ENCODE measurements at regions of chr11 and their contacts with region 1.

Region 1: DNA sequence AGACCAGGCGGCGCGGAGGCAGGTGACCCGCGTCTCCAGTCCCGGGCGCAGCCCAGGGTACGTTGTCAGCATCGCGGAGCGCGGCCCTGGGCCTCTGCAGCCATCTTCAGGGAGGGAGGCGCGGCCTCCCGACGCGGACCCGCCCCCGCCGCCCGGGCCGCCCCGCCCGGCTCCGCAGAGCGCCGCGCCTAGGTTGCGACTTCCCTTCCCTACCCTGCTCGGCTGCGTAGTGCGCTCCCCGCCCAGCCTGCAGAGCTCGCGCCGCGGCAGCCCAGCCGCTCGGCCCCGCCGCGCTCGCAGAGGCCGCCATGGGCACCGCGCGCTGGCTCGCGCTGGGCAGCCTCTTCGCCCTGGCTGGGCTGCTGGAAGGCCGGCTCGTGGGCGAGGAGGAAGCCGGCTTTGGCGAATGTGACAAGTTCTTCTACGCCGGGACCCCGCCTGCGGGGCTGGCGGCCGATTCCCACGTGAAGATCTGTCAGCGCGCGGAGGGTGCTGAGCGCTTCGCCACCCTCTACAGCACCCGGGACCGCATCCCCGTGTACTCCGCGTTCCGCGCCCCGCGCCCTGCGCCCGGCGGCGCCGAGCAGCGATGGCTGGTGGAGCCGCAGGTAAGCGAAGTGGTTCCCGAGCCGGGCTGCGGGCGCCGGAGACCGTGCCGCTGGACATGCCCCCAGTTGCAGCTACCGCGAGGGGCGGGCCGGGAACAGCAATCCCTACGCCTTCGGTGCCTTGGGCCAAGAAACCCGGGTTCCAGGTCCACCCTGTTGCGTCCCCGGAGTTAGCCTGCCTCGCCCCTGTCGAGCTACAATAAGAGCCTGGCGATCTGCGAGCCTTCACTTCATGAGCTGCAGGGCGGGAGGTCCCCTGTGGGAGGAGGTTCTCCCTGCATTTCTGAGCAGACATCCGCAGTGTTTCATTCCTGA is at the start of gene ENDOD1:
- DNase-seq: peak; percentile 47 to 90 (median 79)
- H3K4me3 ChIP-seq: peak within 1 kb of the TSS; percentile 61 to 99 (median 91)
- H3K27ac ChIP-seq: peak within 1 kb of the TSS; percentile 92 to 100 (median 98)
- H3K27me3 ChIP-seq: no peaks in the 10 kb centered on the region
- CTCF ChIP-seq: peak in 36 of 56 donors; percentile 7 to 56 (median 26)
- total RNA-seq, gene ENDOD1: 49.1 to 144 (median 71.1) TPM

Region 2: GRCh38 chr11:95067039-95067840 is 22.6 kb before region 1 on chr11:
- intact Hi-C with region 1: loop called (anchors 1 kb)
- DNase-seq: peak; percentile 73 to 89 (median 82)
- H3K4me3 ChIP-seq: peak overlapping the region; percentile 68 to 96 (median 83)
- H3K27ac ChIP-seq: peak overlapping the region; percentile 88 to 99 (median 96)
- H3K27me3 ChIP-seq: no peaks in the 10 kb centered on the region
- CTCF ChIP-seq: peak in 52 of 56 donors; percentile 20 to 66 (median 49)

Measured in dorsolateral prefrontal cortex (tissue), 120 donors.